ENCODE measurements at regions of chr14 and their contacts with region 1.

Region 1: DNA sequence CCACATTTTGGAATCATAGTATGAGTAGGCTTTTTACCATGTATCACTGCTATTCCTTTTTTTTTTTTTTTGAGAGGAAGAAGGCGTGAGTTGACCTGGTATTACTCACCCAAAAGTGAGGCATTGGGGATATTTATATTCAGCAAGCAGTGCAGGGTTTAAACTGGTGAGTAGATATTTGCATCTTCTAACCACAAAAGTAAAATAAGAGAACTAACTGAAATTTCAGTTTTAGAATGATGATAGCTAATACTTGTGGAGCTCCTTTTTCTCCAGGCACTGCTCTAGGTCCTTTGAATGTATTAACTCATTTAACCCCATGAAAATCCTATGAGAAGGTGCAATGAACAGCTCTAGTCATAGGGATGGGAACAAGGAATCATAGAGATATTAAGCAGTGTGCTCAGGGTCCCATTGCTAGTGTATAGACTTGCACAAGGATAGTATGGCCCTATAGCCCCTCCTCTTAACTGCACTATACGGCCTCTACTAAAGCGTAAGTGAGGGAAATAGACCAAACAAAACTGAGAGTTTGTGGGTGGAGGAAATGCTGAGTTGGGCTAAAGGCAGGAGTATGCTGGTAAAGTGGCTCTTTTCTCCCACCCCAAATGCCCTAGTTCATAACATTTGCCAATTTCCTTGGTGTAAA is 104.3 kb upstream of the MAX start:
- DNase-seq: peak; percentile 82
- ATAC-seq: peak; percentile 59
- H3K4me3 ChIP-seq: peak overlapping the region in 4 of 5 experiments; percentile 1 to 41 (median 24)
- H3K4me3 Mint-ChIP-seq: peak overlapping the region; percentile 79
- H3K27ac ChIP-seq: peak overlapping the region; percentile 91
- H3K27ac Mint-ChIP-seq: peak overlapping the region; percentile 90
- H3K4me1 ChIP-seq: peaks cover 86 to 88% of the 10 kb centered on the region in 2 donors
- H3K4me1 Mint-ChIP-seq: peaks cover 82% of the 10 kb centered on the region
- H3K27me3 ChIP-seq: no peaks in the 10 kb centered on the region
- H3K27me3 Mint-ChIP-seq: no peaks in the 10 kb centered on the region
- CTCF ChIP-seq: no peak

Region 2: DNA sequence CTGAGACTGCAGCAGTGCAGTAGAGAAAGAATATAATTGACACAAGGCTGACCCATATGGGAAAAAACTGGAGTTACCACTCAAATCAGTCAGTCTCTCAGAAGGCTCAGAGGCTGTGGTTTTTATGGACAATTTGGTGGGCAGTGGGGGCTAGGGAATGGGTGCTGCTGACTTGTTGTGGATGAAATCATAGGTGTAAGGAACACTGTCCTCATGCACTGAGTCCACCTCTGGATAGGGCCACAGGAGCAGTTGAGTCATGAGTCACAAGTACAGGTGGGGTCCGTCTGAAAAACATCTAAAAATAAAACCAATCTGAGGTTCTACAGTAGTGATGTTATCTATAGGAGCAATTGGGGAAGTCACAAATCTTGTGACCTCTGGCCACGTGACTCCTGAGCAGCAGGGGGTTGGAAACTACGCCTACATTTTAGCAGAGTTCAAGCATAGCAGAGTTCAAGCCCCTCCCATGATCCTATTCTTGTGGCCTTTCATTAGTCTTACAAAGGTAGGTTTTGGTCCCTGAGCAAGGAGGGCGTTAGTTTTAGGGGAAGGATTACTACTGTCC is 1460.6 kb before region 1 on chr14:
- CTCF ChIA-PET with region 1: no interaction called
- POLR2A ChIA-PET with region 1: no interaction called
- intact Hi-C with region 1: loop called (anchors 5 kb)
- DNase-seq: peak; percentile 87
- ATAC-seq: peak; percentile 75
- H3K4me3 ChIP-seq: peak overlapping the region in 2 of 5 experiments; percentile 1 to 41
- H3K4me3 Mint-ChIP-seq: peak overlapping the region; percentile 76
- H3K27ac ChIP-seq: peak overlapping the region; percentile 94 to 97
- H3K27ac Mint-ChIP-seq: peak overlapping the region; percentile 99
- H3K4me1 ChIP-seq: peaks cover 39 to 54% of the 10 kb centered on the region in 2 donors
- H3K4me1 Mint-ChIP-seq: peaks cover 40% of the 10 kb centered on the region
- H3K27me3 ChIP-seq: no peaks in the 10 kb centered on the region
- H3K27me3 Mint-ChIP-seq: no peaks in the 10 kb centered on the region
- CTCF ChIP-seq: no peak

Region 3: GRCh38 chr14:65102441-65103149 is 104.0 kb before region 1 on chr14 and contains the start of gene MAX:
- CTCF ChIA-PET with region 1: no interaction called
- POLR2A ChIA-PET with region 1: interaction called, 10 read pairs
- intact Hi-C with region 1: loop called (anchors 1 kb)
- DNase-seq: peak; percentile 98
- ATAC-seq: peak; percentile 85
- H3K4me3 ChIP-seq: peak within 1 kb of the TSS; percentile 62 to 97 (median 93)
- H3K4me3 Mint-ChIP-seq: peak within 1 kb of the TSS; percentile 91
- H3K27ac ChIP-seq: peak within 1 kb of the TSS; percentile 95 to 97
- H3K27ac Mint-ChIP-seq: peak within 1 kb of the TSS; percentile 97
- H3K4me1 ChIP-seq: peaks cover 23 to 30% of the 10 kb centered on the region in 2 donors
- H3K4me1 Mint-ChIP-seq: peaks cover 38% of the 10 kb centered on the region
- H3K27me3 ChIP-seq: no peaks in the 10 kb centered on the region
- H3K27me3 Mint-ChIP-seq: no peaks in the 10 kb centered on the region
- CTCF ChIP-seq: no peak
- total RNA-seq, gene MAX: 127 and 130 TPM in 2 replicates

Region 4: DNA sequence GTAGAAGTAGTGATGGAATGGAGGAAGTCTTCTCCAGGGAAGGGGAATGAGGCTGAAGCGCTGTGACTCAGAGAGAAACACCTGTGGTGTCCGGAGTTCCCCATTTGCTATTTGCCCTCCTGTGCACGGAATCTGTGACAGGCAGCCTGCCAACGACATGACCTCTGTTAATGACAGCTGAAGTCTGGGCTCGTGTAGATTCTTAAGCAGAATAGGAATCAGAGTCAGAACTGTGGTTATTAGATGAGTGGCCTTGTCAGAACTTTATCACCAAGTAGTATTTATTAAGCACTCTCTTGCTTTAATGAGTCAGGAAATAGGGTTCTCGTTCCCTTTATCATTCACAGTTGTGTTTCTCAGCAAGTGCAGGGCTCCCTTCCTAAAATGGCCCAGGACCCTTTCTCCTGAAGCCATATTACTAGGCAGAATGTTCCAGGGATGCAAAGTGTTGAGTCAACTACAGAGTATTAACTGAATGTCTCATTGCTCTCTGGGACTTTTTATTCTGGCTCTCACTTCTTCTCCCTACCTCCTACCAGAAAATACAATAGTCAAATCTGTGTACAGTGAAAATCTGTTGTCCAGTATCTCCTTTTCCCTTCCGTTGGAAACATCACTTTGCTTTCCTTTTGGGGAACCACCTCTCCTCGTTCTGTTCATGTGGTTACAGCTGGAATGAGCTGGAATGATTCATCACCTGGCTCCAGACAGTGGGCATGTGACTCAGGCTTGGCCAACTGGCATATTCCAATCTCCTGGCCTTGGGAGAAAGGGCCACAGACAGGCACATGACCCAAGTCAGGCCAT is 26.5 kb before region 1 on chr14:
- CTCF ChIA-PET with region 1: interaction called, 4 read pairs
- POLR2A ChIA-PET with region 1: interaction called, 4 read pairs
- intact Hi-C with region 1: loop called (anchors 1 kb)
- DNase-seq: peak; percentile 79
- ATAC-seq: peak; percentile 93
- H3K4me3 ChIP-seq: peak overlapping the region in 1 of 5 experiments; percentile 15
- H3K4me3 Mint-ChIP-seq: peak overlapping the region; percentile 55
- H3K27ac ChIP-seq: peak overlapping the region in 1 of 2 donors; percentile 72
- H3K27ac Mint-ChIP-seq: peak overlapping the region; percentile 76
- H3K4me1 ChIP-seq: peaks cover 14 to 15% of the 10 kb centered on the region in 2 donors
- H3K4me1 Mint-ChIP-seq: peaks cover 29% of the 10 kb centered on the region
- H3K27me3 ChIP-seq: no peaks in the 10 kb centered on the region
- H3K27me3 Mint-ChIP-seq: no peaks in the 10 kb centered on the region
- CTCF ChIP-seq: no peak

Region 5: GRCh38 chr14:65222440-65222858 is 15.9 kb after region 1 on chr14:
- CTCF ChIA-PET with region 1: interaction called, 14 read pairs
- POLR2A ChIA-PET with region 1: interaction called, 6 read pairs
- intact Hi-C with region 1: no loop called
- DNase-seq: peak; percentile 72
- ATAC-seq: peak; percentile 89
- H3K4me3 ChIP-seq: no peak overlapping the region
- H3K4me3 Mint-ChIP-seq: no peak overlapping the region
- H3K27ac ChIP-seq: no peak overlapping the region
- H3K27ac Mint-ChIP-seq: peak overlapping the region; percentile 39
- H3K4me1 ChIP-seq: peaks cover 42 to 56% of the 10 kb centered on the region in 2 donors
- H3K4me1 Mint-ChIP-seq: peaks cover 49% of the 10 kb centered on the region
- H3K27me3 ChIP-seq: no peaks in the 10 kb centered on the region
- H3K27me3 Mint-ChIP-seq: no peaks in the 10 kb centered on the region
- CTCF ChIP-seq: peak; percentile 87

Region 6: GRCh38 chr14:65287264-65288131 is 80.9 kb after region 1 on chr14:
- CTCF ChIA-PET with region 1: interaction called, 9 read pairs
- POLR2A ChIA-PET with region 1: interaction called, 13 read pairs
- intact Hi-C with region 1: loop called (anchors 1 kb)
- DNase-seq: peak; percentile 75
- ATAC-seq: peak; percentile 59
- H3K4me3 ChIP-seq: peak overlapping the region in 3 of 5 experiments; percentile 3 to 38 (median 16)
- H3K4me3 Mint-ChIP-seq: peak overlapping the region; percentile 70
- H3K27ac ChIP-seq: peak overlapping the region; percentile 89 to 95
- H3K27ac Mint-ChIP-seq: peak overlapping the region; percentile 95
- H3K4me1 ChIP-seq: peaks cover 75 to 87% of the 10 kb centered on the region in 2 donors
- H3K4me1 Mint-ChIP-seq: peaks cover 81% of the 10 kb centered on the region
- H3K27me3 ChIP-seq: no peaks in the 10 kb centered on the region
- H3K27me3 Mint-ChIP-seq: no peaks in the 10 kb centered on the region
- CTCF ChIP-seq: no peak

Region 7: DNA sequence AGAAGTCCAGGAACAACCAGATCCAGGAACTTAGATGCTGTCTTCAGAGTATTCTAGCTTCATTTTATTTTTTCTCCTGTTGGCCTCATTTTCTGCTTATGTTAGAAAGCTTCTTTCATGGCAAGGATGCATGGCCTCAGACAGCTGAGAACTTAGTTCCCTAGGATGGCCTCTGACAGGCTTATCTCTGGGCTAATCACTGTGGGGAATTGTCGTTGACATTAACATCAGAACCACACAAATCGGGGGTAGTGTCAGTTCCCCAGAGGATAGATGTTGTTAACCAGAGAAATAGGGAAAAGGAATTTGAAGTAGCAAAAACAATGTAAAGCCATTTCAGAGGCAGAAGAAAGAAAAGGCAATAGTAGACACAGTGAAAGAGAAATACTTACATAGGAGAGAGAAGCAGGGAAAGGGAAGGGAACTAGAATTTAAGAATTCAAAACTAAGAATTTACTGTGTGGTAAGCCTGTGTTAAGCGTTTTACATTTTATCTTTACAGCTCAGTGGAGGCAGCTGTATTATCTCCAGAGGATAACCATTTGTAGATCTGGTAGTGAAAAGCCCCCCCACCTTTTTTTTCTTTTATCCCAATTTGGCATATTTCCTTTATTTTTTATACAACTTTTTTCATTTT is 227.8 kb after region 1 on chr14:
- CTCF ChIA-PET with region 1: no interaction called
- POLR2A ChIA-PET with region 1: no interaction called
- intact Hi-C with region 1: no loop called
- DNase-seq: no peak
- ATAC-seq: no peak
- H3K4me3 ChIP-seq: no peak overlapping the region
- H3K4me3 Mint-ChIP-seq: no peak overlapping the region
- H3K27ac ChIP-seq: peak overlapping the region; percentile 13 to 17
- H3K27ac Mint-ChIP-seq: peak overlapping the region; percentile 54
- H3K4me1 ChIP-seq: peaks cover 25 to 37% of the 10 kb centered on the region in 2 donors
- H3K4me1 Mint-ChIP-seq: peaks cover 57% of the 10 kb centered on the region
- H3K27me3 ChIP-seq: no peaks in the 10 kb centered on the region
- H3K27me3 Mint-ChIP-seq: no peaks in the 10 kb centered on the region
- CTCF ChIP-seq: no peak

Region 8: GRCh38 chr14:65585216-65585615 is 378.6 kb after region 1 on chr14:
- CTCF ChIA-PET with region 1: no interaction called
- POLR2A ChIA-PET with region 1: no interaction called
- intact Hi-C with region 1: no loop called
- DNase-seq: no peak
- ATAC-seq: no peak
- H3K4me3 ChIP-seq: no peak overlapping the region
- H3K4me3 Mint-ChIP-seq: no peak overlapping the region
- H3K27ac ChIP-seq: no peak overlapping the region
- H3K27ac Mint-ChIP-seq: no peak overlapping the region
- H3K4me1 ChIP-seq: no peaks in the 10 kb centered on the region
- H3K4me1 Mint-ChIP-seq: peaks cover 16% of the 10 kb centered on the region
- H3K27me3 ChIP-seq: no peaks in the 10 kb centered on the region
- H3K27me3 Mint-ChIP-seq: no peaks in the 10 kb centered on the region
- CTCF ChIP-seq: no peak

Measured in B cell (primary cell).